HepG2 (cell line): ENCODE measurements at regions of chr2 and their contacts with region 1.

Region 1: GRCh38 chr2:27409321-27410073 is at the start of gene PPM1G:
- DNase-seq: peak; percentile 91
- ATAC-seq: peak; percentile 94
- H3K4me3 ChIP-seq: peak within 1 kb of the TSS; percentile 86 to 99 (median 93)
- H3K27ac ChIP-seq: peak within 1 kb of the TSS; percentile 95
- H3K4me1 ChIP-seq: peaks cover 75% of the 10 kb centered on the region
- H3K27me3 ChIP-seq: no peaks in the 10 kb centered on the region; a peak in 1 of 5 replicates
- CTCF ChIP-seq: peak; percentile 27
- EP300 ChIP-seq: peak in 1 of 2 experiments; percentile 25; a peak in 1 of 4 replicates
- POLR2A ChIP-seq: peak; percentile 98 to 99
- RAD21 ChIP-seq: peak; percentile 57
- total RNA-seq, gene PPM1G: 211 and 213 TPM in 2 replicates

Region 2: GRCh38 chr2:27233341-27233740 is 176.2 kb before region 1 on chr2:
- CTCF ChIA-PET with region 1: no interaction called
- POLR2A ChIA-PET with region 1: no interaction called
- in situ Hi-C with region 1: no loop called
- intact Hi-C with region 1: no loop called
- DNase-seq: no peak
- ATAC-seq: no peak
- H3K4me3 ChIP-seq: no peak overlapping the region
- H3K27ac ChIP-seq: no peak overlapping the region
- H3K4me1 ChIP-seq: peaks cover 2% of the 10 kb centered on the region; the same call in 1 of the 2 replicates
- H3K27me3 ChIP-seq: no peaks in the 10 kb centered on the region
- CTCF ChIP-seq: no peak
- EP300 ChIP-seq: no peak
- POLR2A ChIP-seq: no peak
- RAD21 ChIP-seq: no peak

Region 3: GRCh38 chr2:27356382-27357181 is 52.9 kb before region 1 on chr2 and contains the start of gene GTF3C2:
- CTCF ChIA-PET with region 1: no interaction called
- POLR2A ChIA-PET with region 1: interaction called, 14 read pairs
- in situ Hi-C with region 1: no loop called
- intact Hi-C with region 1: no loop called
- DNase-seq: peak; percentile 99
- ATAC-seq: peak; percentile 88
- H3K4me3 ChIP-seq: peak within 1 kb of the TSS; percentile 72 to 91 (median 85)
- H3K27ac ChIP-seq: peak within 1 kb of the TSS; percentile 96
- H3K4me1 ChIP-seq: peaks cover 64% of the 10 kb centered on the region
- H3K27me3 ChIP-seq: no peaks in the 10 kb centered on the region; a peak in 1 of 5 replicates
- CTCF ChIP-seq: 0 out of 2 replicates have a peak, but pooled peaks have one; percentile 25
- EP300 ChIP-seq: peak in 1 of 2 experiments; percentile 55; a peak in 3 of 4 replicates
- POLR2A ChIP-seq: peak; percentile 58 to 60
- RAD21 ChIP-seq: peak; percentile 45; the same call in 1 of the 2 replicates
- total RNA-seq, gene GTF3C2: 77.5 and 80.0 TPM in 2 replicates

Region 4: DNA sequence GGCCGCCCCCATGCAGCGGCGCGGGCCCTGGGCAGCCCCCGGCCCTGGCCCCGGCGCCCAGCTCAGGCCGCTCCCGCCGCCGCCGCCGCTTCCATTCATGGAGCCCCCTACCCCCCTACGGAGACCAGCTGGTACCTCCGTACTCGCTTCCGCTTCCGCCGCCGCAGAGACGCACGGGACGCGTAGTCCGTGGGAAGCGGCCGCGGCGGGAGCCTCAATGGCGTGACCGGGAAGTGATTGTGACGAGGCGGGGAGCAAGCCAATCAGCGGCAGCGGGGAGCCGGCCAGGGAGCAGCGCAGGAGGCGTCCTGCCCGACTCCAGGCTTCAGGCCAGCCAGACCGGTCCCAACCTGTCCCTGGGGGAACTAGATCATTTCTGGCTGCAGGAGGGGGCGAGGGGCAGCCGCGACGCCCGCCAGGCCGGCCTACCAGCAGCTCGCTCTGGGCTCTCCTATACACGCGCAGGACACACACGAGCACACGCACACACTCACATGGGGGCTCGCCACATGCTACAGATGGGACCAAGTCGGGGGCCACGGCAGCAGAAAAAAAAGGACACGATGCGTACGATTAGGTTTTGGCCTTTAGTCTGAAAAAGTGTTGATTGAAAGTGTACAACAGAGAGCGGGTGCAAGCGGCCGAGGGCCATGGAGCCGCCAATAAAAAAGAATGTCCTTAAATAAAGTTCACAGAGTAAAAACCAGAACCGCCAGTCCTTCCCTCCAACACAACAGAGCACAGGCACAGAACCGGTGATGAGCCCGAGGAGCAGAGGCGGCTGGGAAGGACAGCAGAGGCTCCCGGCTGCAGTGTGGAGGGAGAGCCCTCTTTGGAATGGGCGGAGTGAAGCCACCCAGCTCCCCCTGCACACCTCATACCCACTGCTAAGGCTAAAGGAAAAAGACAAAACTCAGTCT is 28.6 kb before region 1 on chr2 and contains the start of gene ZNF513:
- CTCF ChIA-PET with region 1: interaction called, 4 read pairs
- POLR2A ChIA-PET with region 1: interaction called, 22 read pairs
- in situ Hi-C with region 1: no loop called
- intact Hi-C with region 1: no loop called
- DNase-seq: peak; percentile 63
- ATAC-seq: peak; percentile 56
- H3K4me3 ChIP-seq: peak within 1 kb of the TSS; percentile 50 to 75 (median 63)
- H3K27ac ChIP-seq: peak within 1 kb of the TSS; percentile 85
- H3K4me1 ChIP-seq: peaks cover 26% of the 10 kb centered on the region
- H3K27me3 ChIP-seq: no peaks in the 10 kb centered on the region
- CTCF ChIP-seq: peak; percentile 10; the same call in 1 of the 2 replicates
- EP300 ChIP-seq: 0 out of 4 replicates have a peak, but pooled peaks of 1 of the 2 experiments have one; percentile 5
- POLR2A ChIP-seq: peak in 1 of 2 experiments; percentile 17; a peak in 1 of 4 replicates
- RAD21 ChIP-seq: peak; percentile 11; the same call in 1 of the 2 replicates
- total RNA-seq, gene ZNF513: 2.4 and 4.9 TPM in 2 replicates

Region 5: GRCh38 chr2:27428213-27428977 is 18.9 kb after region 1 on chr2 and contains the start of gene NRBP1:
- CTCF ChIA-PET with region 1: interaction called, 29 read pairs
- POLR2A ChIA-PET with region 1: interaction called, 133 read pairs
- in situ Hi-C with region 1: no loop called
- intact Hi-C with region 1: loop called (anchors 1 kb)
- DNase-seq: peak; percentile 91
- ATAC-seq: peak; percentile 90
- H3K4me3 ChIP-seq: peak within 1 kb of the TSS; percentile 86 to 100 (median 100)
- H3K27ac ChIP-seq: peak within 1 kb of the TSS; percentile 99
- H3K4me1 ChIP-seq: peaks cover 58% of the 10 kb centered on the region
- H3K27me3 ChIP-seq: no peaks in the 10 kb centered on the region; a peak in 1 of 5 replicates
- CTCF ChIP-seq: peak; percentile 52
- EP300 ChIP-seq: peak in 1 of 2 experiments; percentile 18; a peak in 2 of 4 replicates
- POLR2A ChIP-seq: peak; percentile 93 to 94
- RAD21 ChIP-seq: peak; percentile 64; the same call in 1 of the 2 replicates
- total RNA-seq, gene NRBP1: 165 and 222 TPM in 2 replicates

Region 6: GRCh38 chr2:27461118-27461517 is 51.6 kb after region 1 on chr2:
- CTCF ChIA-PET with region 1: no interaction called
- POLR2A ChIA-PET with region 1: no interaction called
- in situ Hi-C with region 1: no loop called
- intact Hi-C with region 1: no loop called
- DNase-seq: no peak
- ATAC-seq: no peak
- H3K4me3 ChIP-seq: no peak overlapping the region
- H3K27ac ChIP-seq: no peak overlapping the region
- H3K4me1 ChIP-seq: no peaks in the 10 kb centered on the region
- H3K27me3 ChIP-seq: no peaks in the 10 kb centered on the region
- CTCF ChIP-seq: no peak
- EP300 ChIP-seq: no peak
- POLR2A ChIP-seq: no peak
- RAD21 ChIP-seq: no peak

Region 7: DNA sequence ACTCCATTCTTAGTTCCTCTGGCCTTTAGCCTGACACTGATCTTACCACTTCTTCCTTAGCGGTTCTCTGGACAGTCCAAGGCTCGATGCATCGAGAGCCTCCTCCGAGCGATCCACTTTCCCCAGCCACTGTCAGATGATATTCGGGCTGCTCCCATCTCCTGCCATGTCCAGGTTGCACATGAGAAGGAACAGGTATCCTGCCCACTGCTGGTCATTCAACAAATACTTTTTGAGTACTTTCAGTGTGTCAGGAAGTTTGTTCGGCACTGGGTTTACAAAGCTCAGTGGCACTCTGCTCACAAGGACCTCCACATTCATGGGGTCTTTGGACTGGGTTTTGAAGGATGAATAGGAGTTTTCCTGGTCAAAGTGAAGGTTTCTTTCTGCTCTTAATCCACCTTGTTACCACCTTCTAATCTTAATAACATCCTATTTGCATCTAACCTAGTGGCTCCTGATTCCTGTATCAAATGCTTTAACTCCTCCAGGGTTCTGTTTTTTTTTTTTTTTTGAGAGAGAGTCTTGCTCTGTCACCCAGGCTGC is 113.0 kb after region 1 on chr2:
- CTCF ChIA-PET with region 1: no interaction called
- POLR2A ChIA-PET with region 1: no interaction called
- in situ Hi-C with region 1: no loop called
- intact Hi-C with region 1: loop called (anchors 1 kb)
- DNase-seq: peak; percentile 39
- ATAC-seq: peak; percentile 36
- H3K4me3 ChIP-seq: no peak overlapping the region
- H3K27ac ChIP-seq: no peak overlapping the region
- H3K4me1 ChIP-seq: peaks cover 27% of the 10 kb centered on the region
- H3K27me3 ChIP-seq: no peaks in the 10 kb centered on the region
- CTCF ChIP-seq: peak; percentile 45
- EP300 ChIP-seq: no peak
- POLR2A ChIP-seq: no peak
- RAD21 ChIP-seq: no peak

Region 8: DNA sequence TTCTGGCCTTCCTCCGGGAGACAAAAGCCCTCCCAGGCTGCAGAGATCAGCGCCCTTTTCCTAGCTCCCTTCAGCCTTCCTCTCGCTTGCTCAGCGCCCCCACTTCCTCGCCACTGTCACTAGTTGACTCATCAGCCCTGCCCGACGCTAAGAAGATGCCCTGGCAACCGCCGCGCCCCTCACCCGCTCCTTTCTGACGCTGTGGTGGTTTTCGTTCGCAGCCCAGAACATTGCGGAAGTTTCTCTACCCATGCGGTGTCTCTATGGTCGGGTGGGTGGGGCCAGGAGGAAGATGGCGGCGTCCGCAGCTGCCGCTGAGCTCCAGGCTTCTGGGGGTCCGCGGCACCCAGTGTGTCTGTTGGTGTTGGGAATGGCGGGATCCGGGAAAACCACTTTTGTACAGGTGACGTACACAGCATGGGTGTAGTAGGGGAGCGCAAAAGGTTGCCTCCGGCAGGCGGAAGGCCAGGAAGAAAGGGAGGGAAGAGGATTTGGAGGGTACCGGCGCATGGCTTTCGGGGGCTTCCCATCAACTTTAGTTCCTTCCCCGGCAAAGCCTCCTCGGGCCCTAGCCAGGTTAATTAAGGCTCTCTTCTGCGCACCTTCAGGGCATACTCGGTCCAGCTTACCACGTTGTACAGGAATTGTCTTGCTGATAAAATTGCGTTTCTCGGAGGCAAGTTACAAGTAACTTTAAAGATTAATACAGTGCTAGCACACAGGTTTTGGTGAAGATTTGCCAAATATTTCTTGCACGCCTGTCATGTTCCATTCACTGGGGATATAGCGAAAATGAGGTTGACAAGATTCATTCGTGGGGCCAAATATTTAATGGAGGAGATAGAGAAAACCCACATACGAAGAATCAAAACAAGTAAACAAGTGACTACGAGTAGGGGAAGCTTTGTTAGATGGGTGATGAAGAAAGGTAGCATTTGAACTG is 219.5 kb after region 1 on chr2 and contains the starts of genes CCDC121 and GPN1:
- CTCF ChIA-PET with region 1: no interaction called
- POLR2A ChIA-PET with region 1: interaction called, 24 read pairs
- in situ Hi-C with region 1: no loop called
- intact Hi-C with region 1: loop called (anchors 1 kb)
- DNase-seq: peak; percentile 88
- ATAC-seq: peak; percentile 98
- H3K4me3 ChIP-seq: peak within 1 kb of the TSS; percentile 83 to 99 (median 97)
- H3K27ac ChIP-seq: peak within 1 kb of the TSS; percentile 65
- H3K4me1 ChIP-seq: peaks cover 24% of the 10 kb centered on the region
- H3K27me3 ChIP-seq: no peaks in the 10 kb centered on the region; a peak in 1 of 5 replicates
- CTCF ChIP-seq: 0 out of 2 replicates have a peak, but pooled peaks have one; percentile 23
- EP300 ChIP-seq: peak in 1 of 2 experiments; percentile 37; a peak in 1 of 4 replicates
- POLR2A ChIP-seq: peak; percentile 94 to 97
- RAD21 ChIP-seq: peak; percentile 27; the same call in 1 of the 2 replicates
- total RNA-seq, gene CCDC121: 3.0 and 3.8 TPM in 2 replicates
- total RNA-seq, gene GPN1: 62.7 and 98.5 TPM in 2 replicates

Region 9: GRCh38 chr2:27683390-27684071 is 274.0 kb after region 1 on chr2:
- CTCF ChIA-PET with region 1: interaction called, 23 read pairs
- POLR2A ChIA-PET with region 1: interaction called, 5 read pairs
- in situ Hi-C with region 1: no loop called
- intact Hi-C with region 1: loop called (anchors 2 kb)
- DNase-seq: peak; percentile 97
- ATAC-seq: peak; percentile 96
- H3K4me3 ChIP-seq: no peak overlapping the region
- H3K27ac ChIP-seq: peak overlapping the region; percentile 7
- H3K4me1 ChIP-seq: peaks cover 11% of the 10 kb centered on the region
- H3K27me3 ChIP-seq: no peaks in the 10 kb centered on the region
- CTCF ChIP-seq: peak; percentile 97
- EP300 ChIP-seq: 0 out of 4 replicates have a peak, but pooled peaks of 1 of the 2 experiments have one; percentile 14
- POLR2A ChIP-seq: no peak
- RAD21 ChIP-seq: peak; percentile 82